ENCODE measurements at regions of chr16 and their contacts with region 1.

Region 1: GRCh38 chr16:84186685-84187437 is at the start of gene TAF1C:
- DNase-seq: peak; percentile 77 to 91
- H3K4me3 ChIP-seq: peak within 1 kb of the TSS; percentile 87
- H3K4me1 ChIP-seq: no peaks in the 10 kb centered on the region; the same call in 1 of the 2 replicates
- H3K27me3 ChIP-seq: no peaks in the 10 kb centered on the region

Region 2: DNA sequence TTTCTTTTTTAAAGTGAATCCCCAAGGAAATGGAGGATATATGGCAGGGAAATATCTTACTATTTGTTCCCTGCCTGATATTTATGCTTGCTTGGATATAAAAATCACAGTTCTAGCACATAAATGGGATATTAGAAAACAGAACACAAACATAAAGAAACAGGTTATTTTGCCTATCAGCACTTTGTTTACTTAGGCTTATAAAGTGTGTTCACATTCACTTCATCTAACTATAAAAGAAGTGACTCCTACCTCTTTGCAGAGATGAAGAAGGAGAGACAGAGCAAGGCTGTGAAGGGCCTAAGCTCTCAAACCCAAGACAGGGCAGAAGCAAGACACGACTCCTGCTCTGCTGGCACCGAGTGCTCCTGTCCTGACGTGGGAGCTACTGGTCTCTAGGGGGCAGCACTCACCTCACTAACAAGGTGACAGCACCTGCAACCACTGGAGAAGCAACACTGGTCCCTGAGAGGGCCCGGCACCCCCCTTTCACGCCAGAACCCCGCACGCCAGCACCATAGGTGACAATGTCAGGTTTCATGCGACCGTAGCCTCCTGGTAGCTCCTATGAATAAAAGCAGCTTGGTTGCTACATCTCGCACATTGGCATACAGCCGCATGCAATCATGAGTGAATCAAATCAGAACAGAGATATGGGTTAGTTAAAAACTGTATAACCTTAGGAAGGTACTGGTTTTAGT is 102.1 kb before region 1 on chr16:
- in situ Hi-C with region 1: loop called (anchors 10 kb)
- DNase-seq: peak; percentile 48 to 82
- H3K4me3 ChIP-seq: no peak overlapping the region
- H3K4me1 ChIP-seq: no peaks in the 10 kb centered on the region
- H3K27me3 ChIP-seq: no peaks in the 10 kb centered on the region

Measured in HAP-1 (cell line).